Sciatic nerve (tissue), 2 donors: ENCODE measurements at regions of chr14 and their contacts with region 1.

Region 1: GRCh38 chr14:73728717-73729330 is 14.6 kb upstream of the PNMA1 start:
- DNase-seq: peak; percentile 94
- ATAC-seq: peak; percentile 71

Region 2: DNA sequence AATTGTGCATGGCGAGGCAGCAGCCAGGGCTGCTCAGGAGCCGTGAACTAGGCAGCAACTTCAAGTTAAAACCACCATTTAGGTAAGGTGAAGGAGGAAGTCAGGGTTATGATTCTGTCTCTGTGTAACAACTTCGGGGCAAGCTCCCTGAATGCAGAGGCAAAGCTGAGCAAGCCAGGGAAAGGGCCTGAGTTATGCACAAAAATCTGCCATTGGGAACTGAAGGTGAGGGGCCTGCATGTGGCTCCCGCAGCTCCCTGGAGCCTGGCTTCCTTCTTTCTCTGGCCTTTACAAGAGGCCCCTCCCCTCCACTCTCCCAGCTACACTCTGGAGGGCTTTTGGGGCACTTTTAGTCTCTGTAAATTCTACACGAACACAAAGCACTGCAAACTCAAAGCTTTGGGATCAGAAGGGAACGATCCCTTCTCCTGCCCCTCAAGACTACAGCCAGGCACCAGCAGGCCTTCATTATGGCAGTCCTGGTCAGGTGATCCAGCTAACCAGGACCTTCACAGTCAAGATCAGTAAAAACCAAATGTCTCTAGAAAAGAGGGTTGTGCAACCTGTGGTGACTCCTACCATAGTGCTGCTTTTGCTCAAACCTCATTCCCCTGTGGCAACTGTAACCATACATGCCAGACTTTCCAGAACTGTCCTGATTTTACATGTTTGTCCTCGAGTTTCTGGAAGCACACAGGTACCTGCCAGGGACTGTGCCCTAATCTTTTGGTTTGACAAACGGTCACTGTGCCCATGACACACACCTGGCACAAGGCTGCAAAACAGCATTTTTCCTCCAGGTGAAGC is 55.6 kb after region 1 on chr14:
- intact Hi-C with region 1: no loop called
- DNase-seq: no peak
- ATAC-seq: peak; percentile 37

Region 3: DNA sequence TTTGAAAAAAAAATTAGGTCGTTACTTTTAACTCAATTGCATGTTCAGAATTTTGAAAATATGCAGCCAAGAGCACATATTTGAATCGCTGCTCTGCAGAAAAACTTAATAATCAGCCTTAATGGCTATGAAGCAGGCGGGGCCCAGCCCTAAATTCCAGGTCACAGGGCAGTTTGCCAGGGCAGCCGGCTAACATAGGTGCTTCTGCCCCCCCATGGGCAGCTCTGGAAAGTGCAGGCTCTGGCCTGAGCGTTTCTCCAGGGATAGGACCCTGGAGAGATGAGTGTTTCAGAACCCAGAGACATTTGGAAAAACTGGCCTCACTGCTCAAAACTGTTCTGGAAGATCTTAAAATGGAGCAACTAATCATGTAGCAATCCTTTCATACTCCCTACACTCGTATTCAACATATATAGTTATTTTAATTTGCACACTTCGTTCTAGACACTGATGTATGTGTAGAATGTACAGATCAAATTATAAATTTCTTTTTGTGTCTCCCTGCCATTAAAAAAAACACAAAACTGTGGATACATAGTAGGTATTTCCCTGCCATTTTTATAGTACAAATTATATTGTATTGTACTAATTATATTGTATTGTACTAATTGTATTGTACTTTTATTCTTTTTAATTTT is 96.8 kb after region 1 on chr14:
- intact Hi-C with region 1: loop called (anchors 5 kb)
- DNase-seq: peak; percentile 96
- ATAC-seq: peak; percentile 95

Region 4: DNA sequence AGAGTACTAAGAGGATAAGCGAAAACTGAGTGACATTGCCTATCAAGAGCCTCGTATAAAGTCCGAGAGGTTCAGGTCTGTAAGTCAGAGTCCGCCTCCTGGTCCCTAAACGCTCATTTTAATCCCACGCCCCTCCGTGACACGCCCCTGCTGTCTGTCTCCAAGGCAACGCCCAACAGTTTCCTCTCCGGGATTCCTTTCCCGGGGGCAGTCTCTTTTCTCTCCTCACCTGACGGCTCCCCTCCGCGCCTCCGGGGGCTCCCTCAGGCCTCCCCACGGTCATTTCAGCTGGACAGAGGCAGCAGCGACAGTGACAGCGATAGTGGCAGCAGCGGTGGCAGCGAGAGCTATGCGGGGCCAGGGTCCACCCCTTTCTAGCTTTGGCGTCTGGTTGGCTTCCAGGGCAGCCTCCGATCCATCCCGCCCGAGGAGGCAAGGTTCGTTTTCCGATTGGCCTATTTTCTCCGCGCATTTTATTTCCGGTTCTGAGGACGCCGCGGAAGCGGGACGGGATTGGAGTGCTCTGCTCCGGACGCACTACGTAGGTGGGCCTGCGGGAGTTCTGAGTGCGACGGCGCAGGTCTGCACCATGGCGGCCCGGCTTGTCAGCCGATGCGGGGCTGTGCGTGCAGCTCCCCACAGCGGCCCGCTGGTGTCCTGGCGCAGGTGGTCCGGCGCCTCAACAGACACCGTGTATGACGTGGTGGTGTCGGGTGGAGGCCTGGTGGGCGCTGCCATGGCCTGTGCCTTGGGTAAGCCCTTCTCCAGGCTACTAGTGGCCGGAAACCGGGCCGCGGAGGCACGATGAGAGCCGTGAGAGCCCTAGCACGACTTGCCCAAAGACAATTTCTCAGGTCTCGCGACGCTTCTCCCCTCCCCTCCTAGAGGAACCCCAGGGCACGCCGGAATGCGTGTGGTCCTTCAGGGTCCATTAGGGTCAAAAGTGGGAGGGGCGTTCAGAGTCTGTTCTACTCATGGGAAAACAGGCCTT is 221.2 kb after region 1 on chr14 and contains the starts of genes COQ6 and FAM161B:
- intact Hi-C with region 1: loop called (anchors 10 kb)
- DNase-seq: peak; percentile 93
- ATAC-seq: peak; percentile 99
- total RNA-seq, gene COQ6: 23.4 TPM
- total RNA-seq, gene FAM161B: 12.1 TPM

Region 5: GRCh38 chr14:75427482-75428229 is 1698.8 kb after region 1 on chr14 and contains the start of gene JDP2:
- intact Hi-C with region 1: no loop called
- DNase-seq: peak; percentile 97
- ATAC-seq: peak; percentile 92
- total RNA-seq, gene JDP2: 59.7 TPM